ENCODE measurements at regions of chr10 and their contacts with region 1.

Region 1: GRCh38 chr10:92757066-92757710 is 67.4 kb downstream of the HHEX start:
- DNase-seq: peak; percentile 95

Region 2: DNA sequence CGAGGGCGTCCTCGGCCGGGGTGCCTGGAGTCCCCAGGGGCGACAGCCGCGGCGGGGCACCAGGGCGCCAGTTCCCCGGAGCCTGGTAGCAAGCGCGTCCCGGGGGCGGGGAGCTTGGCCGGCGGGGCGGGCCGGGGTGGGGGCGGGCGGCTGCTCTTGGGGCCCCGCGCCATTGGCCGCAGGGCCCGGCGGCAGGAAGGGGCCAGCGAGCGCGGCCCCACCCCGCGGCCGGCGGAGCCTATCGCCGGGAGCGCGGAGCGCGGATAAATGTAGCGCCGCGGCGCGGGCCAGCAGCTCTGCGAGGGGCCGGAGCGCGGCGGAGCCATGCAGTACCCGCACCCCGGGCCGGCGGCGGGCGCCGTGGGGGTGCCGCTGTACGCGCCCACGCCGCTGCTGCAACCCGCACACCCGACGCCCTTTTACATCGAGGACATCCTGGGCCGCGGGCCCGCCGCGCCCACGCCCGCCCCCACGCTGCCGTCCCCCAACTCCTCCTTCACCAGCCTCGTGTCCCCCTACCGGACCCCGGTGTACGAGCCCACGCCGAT is 67.5 kb before region 1 on chr10 and contains the start of gene HHEX:
- intact Hi-C with region 1: loop called in 1 of 2 experiments (anchors 10 kb)
- DNase-seq: peak; percentile 90
- total RNA-seq, gene HHEX: 9.9 to 11.3 TPM

Region 3: DNA sequence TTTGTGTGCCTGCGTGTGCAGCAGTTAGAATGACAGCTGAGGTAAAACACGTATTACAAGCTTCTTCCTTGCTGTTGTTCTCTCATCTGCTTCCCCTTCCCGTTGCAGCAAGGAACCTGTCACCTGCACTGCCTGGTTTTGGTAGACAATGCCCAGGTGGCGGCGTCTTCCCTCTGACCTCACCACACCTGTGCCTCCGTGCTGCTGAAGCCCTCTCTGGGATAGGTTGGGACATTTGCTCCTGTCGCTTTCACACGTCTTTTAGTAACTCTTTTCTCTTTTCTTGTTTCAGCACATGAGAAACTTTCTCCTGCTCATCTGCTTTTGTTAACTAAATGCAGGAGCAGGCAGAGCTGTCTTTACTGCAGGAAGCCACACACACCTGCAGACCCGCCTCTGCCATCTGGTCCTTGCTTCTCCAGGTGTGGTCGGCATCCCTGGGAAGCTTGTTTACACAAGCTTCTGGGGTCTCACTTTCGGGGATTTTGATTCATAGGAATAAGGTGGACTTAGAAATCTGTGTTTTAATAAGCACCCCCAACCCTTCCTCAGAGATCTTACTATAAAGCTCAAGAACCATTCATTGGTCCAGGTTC is 30.5 kb after region 1 on chr10:
- intact Hi-C with region 1: loop called in 1 of 2 experiments (anchors 1 kb)
- DNase-seq: no peak

Region 4: GRCh38 chr10:93006435-93007039 is 249.3 kb after region 1 on chr10:
- intact Hi-C with region 1: no loop called
- DNase-seq: no peak